Activated B cell treated with CpG ODN at 0.5 μM for 24 hours (primary cell): ENCODE measurements at regions of chr19 and their contacts with region 1.

Region 1: DNA sequence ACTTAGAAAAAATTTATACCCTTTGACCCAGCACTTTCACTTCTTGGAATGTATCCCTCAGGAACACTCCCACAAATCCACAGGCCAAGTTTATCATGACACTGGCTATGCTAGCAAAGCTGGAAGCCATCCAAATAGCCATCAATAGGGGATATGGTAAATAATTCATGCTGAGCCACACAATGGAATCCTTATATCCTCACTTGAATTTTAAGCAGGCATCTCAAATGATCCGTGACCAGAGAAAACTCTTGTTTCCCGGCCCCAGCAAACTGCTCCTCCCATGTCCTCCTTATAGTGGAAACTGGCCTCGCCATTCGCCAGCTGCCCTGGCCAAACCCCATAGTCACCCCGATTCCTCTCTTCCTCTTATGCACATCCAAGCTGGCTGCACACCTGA is 37.6 kb downstream of the GRIK5 start:
- DNase-seq: no peak
- ATAC-seq: no peak
- H3K4me3 Mint-ChIP-seq: no peak overlapping the region
- H3K27ac Mint-ChIP-seq: no peak overlapping the region
- H3K4me1 Mint-ChIP-seq: peaks cover 4% of the 10 kb centered on the region
- H3K27me3 Mint-ChIP-seq: peaks cover 14% of the 10 kb centered on the region
- CTCF ChIP-seq: no peak

Region 2: GRCh38 chr19:41934849-41935374 is 97.5 kb before region 1 on chr19:
- CTCF ChIA-PET with region 1: no interaction called
- POLR2A ChIA-PET with region 1: interaction called, 11 read pairs
- intact Hi-C with region 1: no loop called
- DNase-seq: peak; percentile 65
- ATAC-seq: peak; percentile 84
- H3K4me3 Mint-ChIP-seq: no peak overlapping the region
- H3K27ac Mint-ChIP-seq: peak overlapping the region; percentile 79
- H3K4me1 Mint-ChIP-seq: peaks cover 63% of the 10 kb centered on the region
- H3K27me3 Mint-ChIP-seq: no peaks in the 10 kb centered on the region
- CTCF ChIP-seq: no peak

Region 3: GRCh38 chr19:41959056-41960053 is 73.1 kb before region 1 on chr19 and contains the start of gene RABAC1:
- CTCF ChIA-PET with region 1: interaction called, 7 read pairs
- POLR2A ChIA-PET with region 1: no interaction called
- intact Hi-C with region 1: loop called (anchors 1 kb)
- DNase-seq: peak; percentile 79
- ATAC-seq: peak; percentile 91
- H3K4me3 Mint-ChIP-seq: peak within 1 kb of the TSS; percentile 90
- H3K27ac Mint-ChIP-seq: peak within 1 kb of the TSS; percentile 90
- H3K4me1 Mint-ChIP-seq: peaks cover 17% of the 10 kb centered on the region
- H3K27me3 Mint-ChIP-seq: no peaks in the 10 kb centered on the region
- CTCF ChIP-seq: no peak
- total RNA-seq, gene RABAC1: 96.7 and 102 TPM in 2 replicates